A673 (cell line): ENCODE measurements at regions of chr15 and their contacts with region 1.

Region 1: DNA sequence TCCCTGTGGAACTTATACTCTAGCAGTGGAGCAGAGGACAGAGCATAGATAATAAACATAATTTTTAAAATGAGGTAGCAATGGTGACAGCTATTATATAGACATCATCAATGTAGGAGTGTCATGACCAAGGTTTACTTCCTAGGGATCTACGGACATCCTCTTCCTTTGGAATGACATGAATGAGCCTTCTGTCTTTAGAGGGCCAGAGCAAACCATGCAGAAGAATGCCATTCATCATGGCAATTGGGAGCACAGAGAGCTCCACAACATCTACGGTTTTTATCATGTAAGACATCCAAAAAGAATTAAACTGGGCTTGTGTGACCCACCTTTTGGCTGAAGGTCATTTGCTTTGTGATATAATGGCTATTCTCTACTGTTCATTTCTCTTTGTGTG is 30.1 kb upstream of the CAPN3 start:
- DNase-seq: no peak
- H3K4me3 ChIP-seq: no peak overlapping the region
- H3K27ac ChIP-seq: no peak overlapping the region
- H3K4me1 ChIP-seq: no peaks in the 10 kb centered on the region
- H3K27me3 ChIP-seq: no peaks in the 10 kb centered on the region
- CTCF ChIP-seq: no peak

Region 2: DNA sequence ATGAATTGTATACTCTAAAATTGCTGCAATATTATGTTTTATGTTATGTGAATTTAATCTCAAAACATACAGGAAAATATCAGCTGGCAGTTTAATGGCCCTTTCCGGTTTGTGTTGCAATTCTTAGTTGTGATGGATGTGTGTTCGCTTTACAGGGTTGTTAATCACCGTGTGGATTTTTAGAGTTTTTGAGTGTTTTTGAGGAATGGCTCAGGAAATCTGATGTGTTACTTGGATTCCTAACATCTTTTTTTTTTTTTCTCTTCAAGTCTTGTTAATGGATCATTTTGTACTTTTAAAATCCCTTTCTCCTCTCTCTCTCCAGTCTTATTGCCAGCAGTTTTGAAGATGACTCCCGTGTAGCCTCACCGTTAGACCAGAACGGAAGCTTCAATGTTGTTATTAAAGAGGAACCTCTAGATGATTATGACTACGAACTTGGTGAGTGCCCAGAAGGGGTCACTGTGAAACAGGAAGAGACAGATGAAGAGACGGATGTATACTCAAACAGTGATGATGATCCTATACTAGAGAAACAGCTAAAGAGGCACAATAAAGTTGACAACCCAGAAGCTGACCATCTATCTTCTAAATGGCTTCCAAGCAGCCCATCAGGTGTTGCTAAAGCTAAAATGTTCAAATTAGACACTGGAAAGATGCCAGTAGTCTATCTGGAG is 633.3 kb before region 1 on chr15:
- CTCF ChIA-PET with region 1: no interaction called
- POLR2A ChIA-PET with region 1: interaction called, 21 read pairs
- intact Hi-C with region 1: no loop called
- DNase-seq: peak; percentile 84
- H3K4me3 ChIP-seq: peak overlapping the region; percentile 21
- H3K27ac ChIP-seq: peak overlapping the region; percentile 58
- H3K4me1 ChIP-seq: peaks cover 20% of the 10 kb centered on the region
- H3K27me3 ChIP-seq: no peaks in the 10 kb centered on the region
- CTCF ChIP-seq: peak; percentile 74

Region 3: GRCh38 chr15:42137431-42138261 is 191.5 kb before region 1 on chr15:
- CTCF ChIA-PET with region 1: no interaction called
- POLR2A ChIA-PET with region 1: no interaction called
- intact Hi-C with region 1: no loop called
- DNase-seq: peak; percentile 77
- H3K4me3 ChIP-seq: no peak overlapping the region
- H3K27ac ChIP-seq: no peak overlapping the region
- H3K4me1 ChIP-seq: no peaks in the 10 kb centered on the region
- H3K27me3 ChIP-seq: no peaks in the 10 kb centered on the region
- CTCF ChIP-seq: peak; percentile 77